Gastrocnemius medialis (tissue), 4 donors: ENCODE measurements at regions of chr3 and their contacts with region 1.

Region 1: GRCh38 chr3:148075763-148076716 is 621.7 kb upstream of the AGTR1 start:
- DNase-seq: no peak
- ATAC-seq: peak in 1 of 2 donors; percentile 71
- H3K4me3 ChIP-seq: no peak overlapping the region
- H3K27ac ChIP-seq: no peak overlapping the region
- H3K4me1 ChIP-seq: no peaks in the 10 kb centered on the region
- H3K27me3 ChIP-seq: no peaks in the 10 kb centered on the region
- CTCF ChIP-seq: peak in 4 of 5 experiments; percentile 29 to 62 (median 42)
- POLR2A ChIP-seq: no peak

Region 2: GRCh38 chr3:146747928-146748327 is 1328.1 kb before region 1 on chr3:
- in situ Hi-C with region 1: no loop called
- intact Hi-C with region 1: loop called (anchors 5 kb)
- DNase-seq: no peak
- ATAC-seq: no peak
- H3K4me3 ChIP-seq: no peak overlapping the region
- H3K27ac ChIP-seq: no peak overlapping the region
- H3K4me1 ChIP-seq: no peaks in the 10 kb centered on the region
- H3K27me3 ChIP-seq: no peaks in the 10 kb centered on the region
- CTCF ChIP-seq: no peak
- POLR2A ChIP-seq: no peak

Region 3: GRCh38 chr3:147383617-147384016 is 692.4 kb before region 1 on chr3:
- in situ Hi-C with region 1: no loop called
- intact Hi-C with region 1: loop called (anchors 10 kb)
- DNase-seq: no peak
- ATAC-seq: no peak
- H3K4me3 ChIP-seq: no peak overlapping the region
- H3K27ac ChIP-seq: no peak overlapping the region
- H3K4me1 ChIP-seq: no peaks in the 10 kb centered on the region
- H3K27me3 ChIP-seq: peaks cover 10 to 40% (median 32%) of the 10 kb centered on the region in 3 donors
- CTCF ChIP-seq: no peak
- POLR2A ChIP-seq: no peak

Region 4: GRCh38 chr3:147616998-147617619 is 458.9 kb before region 1 on chr3:
- in situ Hi-C with region 1: no loop called
- intact Hi-C with region 1: loop called (anchors 10 kb)
- DNase-seq: no peak
- ATAC-seq: no peak
- H3K4me3 ChIP-seq: no peak overlapping the region
- H3K27ac ChIP-seq: no peak overlapping the region
- H3K4me1 ChIP-seq: peaks cover 0 to 7% of the 10 kb centered on the region in 2 donors
- H3K27me3 ChIP-seq: no peaks in the 10 kb centered on the region
- CTCF ChIP-seq: peak in 4 of 5 experiments; percentile 27 to 62 (median 44)
- POLR2A ChIP-seq: no peak

Region 5: DNA sequence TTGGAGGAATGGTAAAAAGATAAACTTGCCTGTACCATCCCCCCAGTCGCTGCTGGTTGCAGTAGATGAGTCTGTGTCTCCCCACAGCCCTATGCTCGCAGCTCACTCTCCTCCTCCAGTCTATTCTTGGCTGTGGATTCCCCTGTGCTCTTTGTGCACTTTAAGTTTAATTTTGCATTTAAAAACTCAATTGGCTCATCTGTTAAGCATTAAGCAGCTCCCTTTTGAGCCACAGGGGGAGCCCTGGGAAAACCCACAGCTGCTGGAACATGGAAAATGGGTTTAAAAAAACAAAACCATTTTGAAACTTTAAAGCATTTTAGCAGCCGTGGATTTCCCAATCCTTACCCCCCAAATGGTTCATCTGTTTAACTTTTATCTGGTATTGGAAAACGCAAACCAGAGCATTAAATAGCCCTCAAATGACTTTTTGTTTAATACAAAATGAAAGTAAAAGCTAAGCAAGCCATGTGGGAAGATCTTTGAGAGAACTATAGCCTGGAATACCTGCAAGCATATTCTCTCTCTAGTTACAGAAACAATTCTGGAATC is 130.0 kb before region 1 on chr3:
- in situ Hi-C with region 1: no loop called
- intact Hi-C with region 1: no loop called
- DNase-seq: peak in 1 of 2 donors; percentile 3
- ATAC-seq: peak; percentile 62 to 73
- H3K4me3 ChIP-seq: peak overlapping the region; percentile 28 to 63 (median 44)
- H3K27ac ChIP-seq: peak overlapping the region; percentile 21 to 55 (median 31)
- H3K4me1 ChIP-seq: no peaks in the 10 kb centered on the region
- H3K27me3 ChIP-seq: no peaks in the 10 kb centered on the region
- CTCF ChIP-seq: peak in 2 of 5 experiments; percentile 45 to 46
- POLR2A ChIP-seq: no peak